CD4-positive, alpha-beta memory T cell (primary cell): ENCODE measurements at regions of chr2 and their contacts with region 1.

Region 1: GRCh38 chr2:96868555-96869280 is 1.2 kb downstream of the SEMA4C start:
- DNase-seq: peak; percentile 50 to 72 (median 52)
- H3K4me3 ChIP-seq: peak overlapping the region; percentile 47 to 72
- H3K4me3 Mint-ChIP-seq: peak overlapping the region; percentile 69 to 91 (median 88)
- H3K27ac ChIP-seq: peak overlapping the region; percentile 68
- H3K27ac Mint-ChIP-seq: peak overlapping the region in 6 of 7 donors; percentile 79 to 94 (median 92)
- H3K4me1 ChIP-seq: peaks cover 39% of the 10 kb centered on the region
- H3K4me1 Mint-ChIP-seq: peaks cover 27 to 58% (median 42%) of the 10 kb centered on the region in 4 donors
- H3K27me3 ChIP-seq: no peaks in the 10 kb centered on the region
- H3K27me3 Mint-ChIP-seq: no peaks in the 10 kb centered on the region

Region 2: GRCh38 chr2:96848264-96848663 is 20.5 kb before region 1 on chr2:
- CTCF ChIA-PET with region 1: no interaction called
- POLR2A ChIA-PET with region 1: no interaction called
- intact Hi-C with region 1: no loop called
- DNase-seq: no peak
- H3K4me3 ChIP-seq: no peak overlapping the region
- H3K4me3 Mint-ChIP-seq: no peak overlapping the region
- H3K27ac ChIP-seq: no peak overlapping the region
- H3K27ac Mint-ChIP-seq: peak overlapping the region in 1 of 7 donors; percentile 35
- H3K4me1 ChIP-seq: no peaks in the 10 kb centered on the region
- H3K4me1 Mint-ChIP-seq: peaks cover under 1 to 12% (median 7%) of the 10 kb centered on the region in 4 donors
- H3K27me3 ChIP-seq: no peaks in the 10 kb centered on the region
- H3K27me3 Mint-ChIP-seq: no peaks in the 10 kb centered on the region

Region 3: GRCh38 chr2:96888072-96889011 is 19.6 kb after region 1 on chr2:
- CTCF ChIA-PET with region 1: interaction called, 12 read pairs
- POLR2A ChIA-PET with region 1: interaction called, 20 read pairs
- intact Hi-C with region 1: no loop called
- DNase-seq: no peak
- H3K4me3 ChIP-seq: no peak overlapping the region
- H3K4me3 Mint-ChIP-seq: no peak overlapping the region
- H3K27ac ChIP-seq: no peak overlapping the region
- H3K27ac Mint-ChIP-seq: peak overlapping the region in 4 of 7 donors; percentile 50 to 86 (median 78)
- H3K4me1 ChIP-seq: peaks cover 30% of the 10 kb centered on the region
- H3K4me1 Mint-ChIP-seq: peaks cover 30 to 46% (median 36%) of the 10 kb centered on the region in 4 donors
- H3K27me3 ChIP-seq: no peaks in the 10 kb centered on the region
- H3K27me3 Mint-ChIP-seq: no peaks in the 10 kb centered on the region

Region 4: GRCh38 chr2:96927405-96928243 is 58.9 kb after region 1 on chr2:
- CTCF ChIA-PET with region 1: interaction called, 5 read pairs
- POLR2A ChIA-PET with region 1: interaction called, 37 read pairs
- intact Hi-C with region 1: loop called (anchors 1 kb)
- DNase-seq: no peak
- H3K4me3 ChIP-seq: no peak overlapping the region
- H3K4me3 Mint-ChIP-seq: no peak overlapping the region
- H3K27ac ChIP-seq: no peak overlapping the region
- H3K27ac Mint-ChIP-seq: no peak overlapping the region
- H3K4me1 ChIP-seq: peaks cover 27% of the 10 kb centered on the region
- H3K4me1 Mint-ChIP-seq: peaks cover 17 to 40% (median 24%) of the 10 kb centered on the region in 4 donors
- H3K27me3 ChIP-seq: no peaks in the 10 kb centered on the region
- H3K27me3 Mint-ChIP-seq: peaks cover 0 to 1% of the 10 kb centered on the region in 2 donors

Region 5: GRCh38 chr2:96945012-96945804 is 76.5 kb after region 1 on chr2:
- CTCF ChIA-PET with region 1: interaction called, 624 read pairs
- POLR2A ChIA-PET with region 1: interaction called, 194 read pairs
- intact Hi-C with region 1: no loop called
- DNase-seq: no peak
- H3K4me3 ChIP-seq: no peak overlapping the region
- H3K4me3 Mint-ChIP-seq: peak overlapping the region in 2 of 8 donors; percentile 9 to 59
- H3K27ac ChIP-seq: no peak overlapping the region
- H3K27ac Mint-ChIP-seq: no peak overlapping the region
- H3K4me1 ChIP-seq: peaks cover 22% of the 10 kb centered on the region
- H3K4me1 Mint-ChIP-seq: peaks cover 24 to 34% (median 27%) of the 10 kb centered on the region in 4 donors
- H3K27me3 ChIP-seq: no peaks in the 10 kb centered on the region
- H3K27me3 Mint-ChIP-seq: peaks cover 0 to 1% of the 10 kb centered on the region in 2 donors